PC-3 (cell line): ENCODE measurements at regions of chr10 and their contacts with region 1.

Region 1: DNA sequence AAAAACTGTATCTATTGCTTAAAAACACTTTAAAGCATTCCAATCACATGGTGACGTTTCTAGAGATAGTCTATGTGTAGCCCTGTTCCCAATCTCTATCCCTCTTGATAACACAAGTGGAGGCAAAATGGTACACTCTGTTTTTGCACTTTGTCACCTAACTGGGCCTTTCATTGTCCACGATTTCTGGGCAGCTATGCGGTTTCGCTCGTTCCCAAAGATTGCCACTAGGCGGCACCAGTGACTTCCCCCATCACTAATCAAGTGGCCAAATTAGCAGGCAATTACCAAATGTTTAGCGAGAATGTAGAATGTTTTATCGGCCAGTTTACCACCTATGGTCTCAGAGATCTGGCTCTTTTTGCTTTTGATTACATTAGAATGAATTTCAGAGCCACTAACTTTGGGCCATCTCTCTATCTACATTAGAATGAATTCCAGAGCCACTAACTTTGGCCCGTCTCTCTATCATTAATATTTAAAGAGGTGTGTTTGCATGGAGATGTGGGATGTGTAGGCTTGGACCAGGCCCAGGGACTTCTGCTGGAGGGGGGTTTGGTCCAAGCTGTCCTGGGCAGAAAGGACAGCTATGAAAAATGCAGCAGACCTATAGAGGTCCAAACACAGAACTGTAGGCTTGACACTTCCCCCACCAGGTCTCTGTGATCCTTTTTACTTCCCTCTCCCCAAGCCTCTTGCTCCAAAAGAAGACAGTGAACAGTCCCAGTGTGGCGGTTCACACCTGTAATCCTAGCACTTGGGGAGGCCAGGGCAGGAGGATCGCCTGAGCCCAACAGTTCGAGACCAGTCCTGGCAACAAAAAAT is 90.1 kb downstream of the EPC1 start:
- DNase-seq: peak; percentile 47
- ATAC-seq: peak; percentile 50
- H3K4me3 ChIP-seq: no peak overlapping the region
- H3K27ac ChIP-seq: no peak overlapping the region
- H3K4me1 ChIP-seq: peaks cover 13% of the 10 kb centered on the region
- H3K27me3 ChIP-seq: no peaks in the 10 kb centered on the region
- CTCF ChIP-seq: peak; percentile 87

Region 2: DNA sequence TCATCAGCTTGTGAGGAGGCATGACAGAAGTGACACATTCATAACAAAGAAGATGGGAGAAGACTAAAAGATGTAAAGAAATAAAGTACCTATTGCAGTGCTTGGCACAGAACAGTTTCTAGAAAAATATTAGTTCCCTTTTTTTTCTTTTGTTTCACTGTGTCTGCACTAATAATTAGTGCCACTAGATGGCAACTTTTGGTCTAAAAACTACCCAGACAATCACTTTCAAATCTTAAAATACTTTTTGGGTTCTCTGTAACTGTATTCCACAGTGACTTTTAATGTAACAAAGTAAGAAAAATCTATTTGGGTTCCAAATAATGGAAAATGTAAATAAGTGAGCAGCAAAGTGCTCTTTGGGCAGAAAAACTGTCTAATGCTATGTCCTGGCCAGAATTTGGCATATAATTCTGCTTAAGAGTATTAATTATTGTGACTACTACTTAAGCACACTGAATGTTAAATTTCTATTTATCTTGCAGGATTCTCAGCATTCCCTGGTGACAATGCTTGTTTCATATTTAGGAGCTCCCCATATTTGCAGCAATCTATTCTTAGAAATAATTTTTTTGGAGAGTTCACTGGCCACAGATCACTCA is 65.8 kb before region 1 on chr10:
- CTCF ChIA-PET with region 1: no interaction called
- POLR2A ChIA-PET with region 1: no interaction called
- intact Hi-C with region 1: no loop called
- DNase-seq: peak; percentile 58
- ATAC-seq: peak; percentile 27
- H3K4me3 ChIP-seq: no peak overlapping the region
- H3K27ac ChIP-seq: no peak overlapping the region
- H3K4me1 ChIP-seq: no peaks in the 10 kb centered on the region
- H3K27me3 ChIP-seq: no peaks in the 10 kb centered on the region
- CTCF ChIP-seq: peak; percentile 70

Region 3: GRCh38 chr10:32367793-32368453 is 111.1 kb after region 1 on chr10:
- CTCF ChIA-PET with region 1: no interaction called
- POLR2A ChIA-PET with region 1: no interaction called
- intact Hi-C with region 1: loop called (anchors 1 kb)
- DNase-seq: peak; percentile 92
- ATAC-seq: peak; percentile 59
- H3K4me3 ChIP-seq: no peak overlapping the region
- H3K27ac ChIP-seq: no peak overlapping the region
- H3K4me1 ChIP-seq: peaks cover 9% of the 10 kb centered on the region; the same call in 1 of the 2 replicates
- H3K27me3 ChIP-seq: no peaks in the 10 kb centered on the region
- CTCF ChIP-seq: peak; percentile 98